Sciatic nerve (tissue), 2 donors: ENCODE measurements at regions of chr10 and their contacts with region 1.

Region 1: DNA sequence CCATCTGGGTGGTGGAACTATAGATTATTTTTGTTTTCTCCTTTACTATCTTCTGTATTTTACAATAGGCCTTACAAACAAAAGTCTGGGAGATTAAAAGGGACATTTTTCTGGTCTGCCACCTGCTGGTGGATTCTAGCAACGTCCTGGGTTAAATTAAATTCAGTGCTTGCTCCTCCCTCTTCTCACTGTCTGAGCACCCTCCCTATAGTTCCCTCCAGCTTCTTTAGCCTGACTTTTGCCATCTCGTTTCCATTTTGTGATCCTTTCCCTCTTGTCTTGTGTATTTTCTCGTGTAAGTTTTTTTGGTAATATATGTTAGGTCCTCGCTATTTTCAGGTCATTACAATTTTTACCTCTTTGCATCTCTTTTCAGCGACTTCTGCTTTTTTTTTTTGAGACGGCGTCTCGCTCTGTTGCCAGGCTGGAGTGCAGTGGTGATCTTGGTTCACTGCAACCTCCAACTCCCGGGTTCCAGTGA is 16.1 kb downstream of the ANKRD16 start:
- DNase-seq: peak; percentile 82
- ATAC-seq: peak; percentile 55

Region 2: DNA sequence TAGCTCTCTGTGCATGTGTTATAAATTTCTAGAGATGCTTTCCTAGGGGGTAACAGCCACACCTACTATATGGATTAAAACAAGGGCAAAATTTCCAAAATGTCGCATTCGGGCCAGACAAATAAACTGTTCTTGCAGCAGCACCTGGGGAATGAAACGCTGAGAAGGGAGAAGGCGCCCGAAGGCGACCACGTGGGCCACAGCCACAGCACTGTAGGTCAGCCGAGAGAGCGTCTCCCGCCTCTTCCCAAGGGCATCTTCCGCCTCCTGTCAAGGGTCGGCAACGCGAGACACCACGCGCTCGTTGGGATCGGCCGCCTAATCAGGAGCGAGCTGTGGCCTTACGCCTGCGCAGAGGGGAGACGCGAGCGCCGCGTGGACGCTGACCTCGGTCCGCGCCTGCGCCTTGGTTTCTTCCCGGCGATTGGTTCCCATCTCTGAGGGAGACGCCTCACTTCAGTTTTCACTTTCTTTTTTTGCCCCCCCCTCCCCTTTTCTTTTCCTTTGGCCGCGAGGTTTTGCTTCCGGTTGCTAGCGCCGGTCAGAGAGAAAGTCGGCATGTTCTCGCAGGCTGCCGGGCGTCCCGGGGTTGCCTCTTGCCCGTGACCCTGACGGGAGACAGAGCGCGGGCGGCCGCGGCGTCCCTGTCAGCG is 189.1 kb before region 1 on chr10 and contains the start of gene TASOR2:
- intact Hi-C with region 1: loop called (anchors 10 kb)
- DNase-seq: peak; percentile 98
- ATAC-seq: peak; percentile 99
- total RNA-seq, gene TASOR2: 77.3 TPM

Region 3: DNA sequence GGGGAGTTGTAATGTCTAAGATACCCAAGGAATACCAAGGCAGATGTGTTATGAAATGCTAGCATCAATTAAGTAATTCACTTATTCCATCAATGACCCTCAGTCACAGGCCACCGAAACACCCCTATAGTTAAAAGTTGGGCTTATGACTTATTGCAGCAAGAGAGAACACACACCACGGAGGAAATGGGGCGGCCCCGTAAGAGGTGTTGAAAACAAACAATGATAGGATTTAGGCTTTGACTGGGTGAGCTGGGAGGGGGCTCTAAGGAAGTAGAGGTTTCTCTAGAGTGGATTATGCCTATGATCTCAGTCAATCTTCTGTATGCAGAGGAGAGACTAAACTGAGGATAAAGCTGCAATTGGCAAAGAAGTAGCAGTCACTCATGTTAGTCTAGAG is 751.9 kb after region 1 on chr10:
- intact Hi-C with region 1: no loop called
- DNase-seq: no peak
- ATAC-seq: no peak